Posterior vena cava (tissue), 2 donors: ENCODE measurements at regions of chr15 and their contacts with region 1.

Region 1: GRCh38 chr15:81454024-81454423 is 80.0 kb upstream of the TMC3 start:
- DNase-seq: no peak

Region 2: GRCh38 chr15:81516461-81516860 is 62.4 kb after region 1 on chr15:
- intact Hi-C with region 1: loop called in 1 of 2 experiments (anchors 2 kb)
- DNase-seq: no peak